IMR-90 (cell line): ENCODE measurements at regions of chr11 and their contacts with region 1.

Region 1: GRCh38 chr11:82802710-82803109 is 69.0 kb upstream of the FAM181B start:
- DNase-seq: no peak
- ATAC-seq: no peak
- H3K4me3 ChIP-seq: no peak overlapping the region
- H3K27ac ChIP-seq: no peak overlapping the region
- H3K4me1 ChIP-seq: no peaks in the 10 kb centered on the region
- H3K27me3 ChIP-seq: peaks cover 3% of the 10 kb centered on the region
- CTCF ChIP-seq: no peak
- POLR2A ChIP-seq: no peak
- RAD21 ChIP-seq: no peak

Region 2: GRCh38 chr11:82831364-82831763 is 28.7 kb after region 1 on chr11:
- CTCF ChIA-PET with region 1: no interaction called
- POLR2A ChIA-PET with region 1: interaction called, 11 read pairs
- dilution Hi-C with region 1: no loop called
- in situ Hi-C with region 1: no loop called
- intact Hi-C with region 1: no loop called
- DNase-seq: no peak
- ATAC-seq: no peak
- H3K4me3 ChIP-seq: no peak overlapping the region
- H3K27ac ChIP-seq: no peak overlapping the region
- H3K4me1 ChIP-seq: no peaks in the 10 kb centered on the region
- H3K27me3 ChIP-seq: no peaks in the 10 kb centered on the region
- CTCF ChIP-seq: no peak
- POLR2A ChIP-seq: no peak
- RAD21 ChIP-seq: no peak

Region 3: DNA sequence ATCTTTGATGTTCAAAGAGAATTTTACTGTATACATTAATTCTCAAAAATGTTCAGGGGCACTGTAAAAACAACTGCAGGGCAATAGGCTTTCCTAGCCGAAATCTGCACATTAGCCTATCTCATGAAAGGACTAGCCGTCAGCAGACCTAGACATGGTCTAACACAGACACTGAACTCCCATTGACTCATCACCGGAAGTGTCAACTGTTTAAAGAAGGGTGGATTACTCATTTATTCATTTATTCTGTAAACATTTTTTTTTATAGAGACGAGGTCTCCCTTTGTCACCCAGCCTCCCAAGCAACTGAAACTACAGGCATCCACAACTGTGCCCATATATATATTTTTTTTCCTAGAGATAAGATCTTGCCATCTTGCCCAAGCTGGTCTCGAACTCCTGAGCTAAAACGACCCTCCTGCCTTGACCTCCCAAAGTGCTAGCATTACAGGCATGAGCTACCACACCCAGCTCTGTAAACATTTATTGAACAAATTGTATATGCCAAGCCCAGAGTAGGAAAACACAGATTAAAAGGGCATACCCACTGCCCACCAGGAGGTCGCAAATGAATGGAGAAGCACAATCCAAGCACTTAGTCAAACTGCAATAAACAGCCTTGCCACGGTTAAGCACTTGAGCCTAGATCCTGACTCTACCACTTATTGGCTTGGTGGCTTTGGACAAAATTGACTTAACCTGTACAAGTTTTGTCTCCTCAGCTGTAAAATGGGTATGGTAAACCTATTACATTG is 242.4 kb after region 1 on chr11:
- CTCF ChIA-PET with region 1: no interaction called
- POLR2A ChIA-PET with region 1: no interaction called
- dilution Hi-C with region 1: no loop called
- in situ Hi-C with region 1: no loop called
- intact Hi-C with region 1: no loop called
- DNase-seq: peak; percentile 92
- ATAC-seq: peak; percentile 87
- H3K4me3 ChIP-seq: no peak overlapping the region
- H3K27ac ChIP-seq: peak overlapping the region; percentile 21; the same call in 1 of the 2 replicates
- H3K4me1 ChIP-seq: peaks cover 16% of the 10 kb centered on the region
- H3K27me3 ChIP-seq: no peaks in the 10 kb centered on the region
- CTCF ChIP-seq: no peak
- POLR2A ChIP-seq: no peak
- RAD21 ChIP-seq: no peak